HepG2 (cell line): ENCODE measurements at regions of chr22 and their contacts with region 1.

Region 1: DNA sequence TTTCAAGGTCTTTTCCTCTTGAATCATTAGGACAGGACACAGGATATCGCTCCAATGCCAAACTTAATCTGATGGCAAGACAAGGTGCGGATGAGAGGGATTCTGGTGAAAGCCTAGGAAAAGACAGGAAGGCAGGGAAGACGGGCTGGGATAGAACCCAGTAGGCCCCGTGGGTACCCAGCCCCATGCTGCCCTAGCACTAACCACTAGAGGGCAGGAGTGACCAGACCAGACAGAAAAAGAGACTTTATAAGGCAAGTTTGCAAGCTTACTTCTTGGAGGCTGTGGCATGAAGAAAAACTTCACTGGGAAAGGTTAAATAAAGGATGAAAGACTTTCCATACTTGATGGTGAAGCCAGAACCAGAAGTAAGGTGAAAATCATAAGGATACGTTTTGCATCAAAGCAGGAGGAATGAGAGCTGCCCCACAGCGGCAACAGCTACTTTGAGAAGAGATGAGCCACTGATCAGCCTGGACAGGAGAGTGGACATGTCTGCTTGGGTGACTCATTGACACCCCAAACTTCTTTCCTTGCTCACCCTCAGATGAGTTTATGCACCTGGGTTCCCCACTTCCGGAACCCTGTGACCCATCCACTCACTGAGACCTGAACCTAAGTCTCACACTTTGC is 39.8 kb downstream of the SYN3 start:
- DNase-seq: peak; percentile 43
- ATAC-seq: peak; percentile 89
- H3K4me3 ChIP-seq: no peak overlapping the region
- H3K27ac ChIP-seq: no peak overlapping the region
- H3K4me1 ChIP-seq: peaks cover 17% of the 10 kb centered on the region
- H3K27me3 ChIP-seq: no peaks in the 10 kb centered on the region
- CTCF ChIP-seq: peak; percentile 87
- EP300 ChIP-seq: no peak
- POLR2A ChIP-seq: no peak
- RAD21 ChIP-seq: 0 out of 2 replicates have a peak, but pooled peaks have one; percentile 24

Region 2: DNA sequence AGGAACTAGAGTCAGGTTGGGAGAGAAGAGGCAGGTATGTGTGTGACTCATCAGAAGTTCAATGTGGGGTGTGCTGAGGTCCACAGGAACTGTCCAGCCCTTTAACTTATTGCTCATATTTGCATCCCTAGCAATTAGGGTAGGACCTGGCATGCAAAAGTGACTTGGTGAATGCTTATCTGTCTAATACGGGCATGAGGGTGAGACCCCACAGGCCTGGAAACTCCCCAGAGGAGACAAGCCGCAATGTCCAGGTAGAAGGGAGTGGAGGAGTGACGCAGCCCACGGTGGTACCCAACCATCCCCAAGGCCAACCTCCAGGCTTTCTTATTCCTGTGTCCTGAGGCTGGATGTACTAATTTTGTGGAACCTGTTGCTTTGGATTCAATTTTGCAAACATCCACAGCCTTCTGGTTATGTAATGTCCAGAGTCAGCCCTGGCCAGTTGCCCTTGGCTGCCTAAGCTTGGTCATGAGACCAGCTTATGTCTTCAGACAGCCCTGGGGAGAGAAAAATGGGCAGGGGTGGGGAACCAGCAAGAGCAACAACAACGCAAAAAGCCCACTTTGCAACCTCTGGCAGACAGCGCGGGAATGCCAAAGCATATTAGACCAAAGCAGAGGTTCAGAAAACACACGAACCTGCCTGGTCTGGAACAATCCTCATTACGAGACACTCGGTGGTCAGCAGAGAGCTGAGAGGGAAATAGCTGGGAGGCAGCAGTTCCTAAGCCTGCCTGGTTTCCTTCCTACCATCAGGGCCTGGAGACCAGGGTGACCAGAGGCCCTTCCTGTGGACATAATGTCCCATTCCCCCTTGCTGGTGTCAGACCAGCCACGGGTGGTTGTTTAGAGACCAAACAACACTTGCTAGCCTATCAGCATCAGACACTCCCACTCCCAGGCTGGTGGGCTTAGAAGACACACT is 167.5 kb before region 1 on chr22:
- CTCF ChIA-PET with region 1: no interaction called
- POLR2A ChIA-PET with region 1: no interaction called
- in situ Hi-C with region 1: no loop called
- intact Hi-C with region 1: no loop called
- DNase-seq: no peak
- ATAC-seq: no peak
- H3K4me3 ChIP-seq: no peak overlapping the region
- H3K27ac ChIP-seq: no peak overlapping the region
- H3K4me1 ChIP-seq: no peaks in the 10 kb centered on the region
- H3K27me3 ChIP-seq: no peaks in the 10 kb centered on the region
- CTCF ChIP-seq: no peak
- EP300 ChIP-seq: no peak
- POLR2A ChIP-seq: no peak
- RAD21 ChIP-seq: no peak

Region 3: GRCh38 chr22:33049119-33049729 is 30.9 kb after region 1 on chr22:
- CTCF ChIA-PET with region 1: interaction called, 16 read pairs
- POLR2A ChIA-PET with region 1: no interaction called
- in situ Hi-C with region 1: no loop called
- intact Hi-C with region 1: loop called (anchors 2 kb)
- DNase-seq: peak; percentile 62
- ATAC-seq: peak; percentile 72
- H3K4me3 ChIP-seq: no peak overlapping the region
- H3K27ac ChIP-seq: no peak overlapping the region
- H3K4me1 ChIP-seq: peaks cover 41% of the 10 kb centered on the region
- H3K27me3 ChIP-seq: no peaks in the 10 kb centered on the region
- CTCF ChIP-seq: peak; percentile 82
- EP300 ChIP-seq: no peak
- POLR2A ChIP-seq: no peak
- RAD21 ChIP-seq: no peak

Region 4: GRCh38 chr22:33126881-33127280 is 108.5 kb after region 1 on chr22:
- CTCF ChIA-PET with region 1: interaction called, 3 read pairs
- POLR2A ChIA-PET with region 1: no interaction called
- in situ Hi-C with region 1: loop called (anchors 5 kb)
- intact Hi-C with region 1: loop called (anchors 10 kb)
- DNase-seq: peak; percentile 39
- ATAC-seq: peak; percentile 47; the same call in 2 of the 3 replicates
- H3K4me3 ChIP-seq: no peak overlapping the region
- H3K27ac ChIP-seq: no peak overlapping the region
- H3K4me1 ChIP-seq: peaks cover 18% of the 10 kb centered on the region
- H3K27me3 ChIP-seq: peaks cover 0 to 33% of the 10 kb centered on the region in 2 experiments; a peak in 4 of 5 replicates
- CTCF ChIP-seq: peak; percentile 73
- EP300 ChIP-seq: no peak
- POLR2A ChIP-seq: no peak
- RAD21 ChIP-seq: no peak

Region 5: DNA sequence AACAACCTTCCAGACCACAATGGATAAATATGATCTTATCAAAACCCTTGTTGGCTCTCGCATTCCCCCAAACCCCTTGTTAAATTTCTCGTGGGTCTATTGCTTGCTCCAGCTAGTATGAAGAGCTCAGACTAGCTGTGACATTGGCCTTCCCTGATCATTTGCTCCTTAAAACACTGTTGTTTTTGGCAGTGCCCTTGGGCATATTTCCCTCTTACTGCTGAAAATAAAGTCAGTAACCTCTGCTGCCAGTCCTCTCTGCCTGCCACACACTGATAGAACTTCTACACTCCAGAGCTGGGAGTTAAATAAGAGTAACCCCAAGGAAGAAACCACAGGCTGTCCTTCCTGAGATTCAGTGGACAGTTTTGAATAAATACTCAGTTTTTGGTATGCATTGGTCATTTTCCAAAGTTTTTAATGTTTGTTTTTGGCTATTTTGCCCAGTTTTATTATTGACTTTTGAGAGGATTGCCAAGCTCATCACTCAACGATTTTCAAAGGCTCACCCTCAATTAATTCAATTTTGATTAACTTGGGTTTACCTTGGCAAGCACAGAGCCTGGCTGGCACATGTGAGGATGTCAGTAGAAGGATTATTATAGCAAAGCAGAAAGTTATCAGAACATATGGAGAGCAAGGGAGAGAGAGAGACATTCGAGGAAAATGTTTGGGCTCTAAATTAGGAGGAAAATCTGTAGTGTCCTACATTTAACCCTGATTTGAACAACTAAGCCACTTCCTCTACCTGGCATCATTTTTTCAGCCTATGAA is 124.1 kb after region 1 on chr22:
- CTCF ChIA-PET with region 1: no interaction called
- POLR2A ChIA-PET with region 1: no interaction called
- in situ Hi-C with region 1: no loop called
- intact Hi-C with region 1: no loop called
- DNase-seq: no peak
- ATAC-seq: no peak
- H3K4me3 ChIP-seq: no peak overlapping the region
- H3K27ac ChIP-seq: no peak overlapping the region
- H3K4me1 ChIP-seq: no peaks in the 10 kb centered on the region
- H3K27me3 ChIP-seq: no peaks in the 10 kb centered on the region
- CTCF ChIP-seq: no peak
- EP300 ChIP-seq: no peak
- POLR2A ChIP-seq: no peak
- RAD21 ChIP-seq: no peak

Region 6: DNA sequence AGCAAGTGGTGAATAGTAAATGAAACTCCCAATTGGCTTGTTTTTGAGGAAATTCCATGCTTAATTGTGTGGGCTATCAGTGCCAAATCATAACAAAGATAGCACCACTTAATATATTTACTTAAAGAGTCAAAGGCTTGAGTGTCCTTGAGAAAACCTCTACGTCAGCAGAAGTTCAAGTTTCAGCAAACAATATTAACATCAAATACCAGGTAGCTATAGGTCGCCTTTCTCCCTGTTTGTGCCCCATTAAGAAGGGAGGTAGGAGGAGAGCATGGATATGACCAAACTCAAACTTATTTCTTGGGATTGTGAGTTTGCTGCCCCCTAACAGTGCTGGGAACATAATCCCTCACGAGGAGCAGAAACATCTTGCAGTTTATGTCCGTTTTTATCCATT is 145.5 kb after region 1 on chr22:
- CTCF ChIA-PET with region 1: no interaction called
- POLR2A ChIA-PET with region 1: no interaction called
- in situ Hi-C with region 1: no loop called
- intact Hi-C with region 1: no loop called
- DNase-seq: no peak
- ATAC-seq: no peak
- H3K4me3 ChIP-seq: no peak overlapping the region
- H3K27ac ChIP-seq: no peak overlapping the region
- H3K4me1 ChIP-seq: peaks cover 7% of the 10 kb centered on the region
- H3K27me3 ChIP-seq: peaks cover 0 to 23% of the 10 kb centered on the region in 2 experiments; a peak in 2 of 5 replicates
- CTCF ChIP-seq: no peak
- EP300 ChIP-seq: no peak
- POLR2A ChIP-seq: no peak
- RAD21 ChIP-seq: no peak

Region 7: GRCh38 chr22:33202455-33202854 is 184.1 kb after region 1 on chr22:
- CTCF ChIA-PET with region 1: interaction called, 17 read pairs
- POLR2A ChIA-PET with region 1: no interaction called
- in situ Hi-C with region 1: loop called (anchors 5 kb)
- intact Hi-C with region 1: loop called (anchors 1 kb)
- DNase-seq: no peak
- ATAC-seq: no peak
- H3K4me3 ChIP-seq: no peak overlapping the region
- H3K27ac ChIP-seq: no peak overlapping the region
- H3K4me1 ChIP-seq: no peaks in the 10 kb centered on the region
- H3K27me3 ChIP-seq: peaks cover 0 to 37% of the 10 kb centered on the region in 2 experiments; a peak in 4 of 5 replicates
- CTCF ChIP-seq: no peak
- EP300 ChIP-seq: no peak
- POLR2A ChIP-seq: no peak
- RAD21 ChIP-seq: no peak

Region 8: DNA sequence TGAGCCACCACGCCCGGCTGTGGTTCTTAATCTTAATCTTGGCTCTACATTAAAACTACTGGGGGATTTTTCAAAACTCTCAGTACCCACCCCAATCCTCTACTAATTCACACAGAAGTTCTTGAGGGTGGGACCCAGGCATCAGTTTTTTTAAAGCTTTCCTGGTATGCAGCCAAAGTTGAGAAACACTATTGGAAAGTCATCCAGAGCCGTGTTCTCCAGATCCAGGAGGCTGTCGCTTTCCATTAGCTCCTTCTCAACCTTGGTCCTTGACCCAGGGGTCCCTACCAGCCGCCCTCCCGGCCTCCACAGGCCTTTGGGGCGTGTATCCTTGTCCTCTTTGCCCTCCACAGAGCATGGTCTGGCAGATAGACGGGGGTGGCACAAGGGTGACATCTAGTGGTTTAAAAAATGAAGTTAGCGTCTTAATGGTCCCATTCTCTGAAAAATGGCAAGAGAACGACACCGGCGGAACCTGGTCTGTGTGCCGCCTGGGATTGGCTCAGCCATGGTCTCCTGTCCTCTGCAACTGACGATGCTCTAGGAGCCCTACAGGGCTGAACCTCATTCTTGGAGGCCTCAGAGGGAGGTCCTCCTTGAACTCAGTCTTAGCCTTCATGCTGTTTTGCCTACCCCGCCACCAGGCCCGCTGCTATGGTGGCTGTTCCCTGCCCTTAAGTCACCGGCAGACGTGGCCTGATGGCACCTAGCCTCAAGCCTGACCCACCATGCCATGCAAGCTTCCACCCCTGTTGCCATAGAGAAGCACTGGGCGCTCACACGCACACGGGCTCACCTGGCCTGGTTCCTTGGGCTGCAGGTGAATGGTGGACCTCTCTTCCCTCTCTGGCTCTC is 191.8 kb after region 1 on chr22:
- CTCF ChIA-PET with region 1: interaction called, 11 read pairs
- POLR2A ChIA-PET with region 1: no interaction called
- in situ Hi-C with region 1: no loop called
- intact Hi-C with region 1: no loop called
- DNase-seq: peak; percentile 47
- ATAC-seq: peak; percentile 95
- H3K4me3 ChIP-seq: no peak overlapping the region
- H3K27ac ChIP-seq: no peak overlapping the region
- H3K4me1 ChIP-seq: no peaks in the 10 kb centered on the region
- H3K27me3 ChIP-seq: peaks cover 0 to 37% of the 10 kb centered on the region in 2 experiments; a peak in 2 of 5 replicates
- CTCF ChIP-seq: peak; percentile 81
- EP300 ChIP-seq: no peak
- POLR2A ChIP-seq: no peak
- RAD21 ChIP-seq: peak; percentile 58